Activated CD4-positive, alpha-beta T cell treated with anti-CD3 and anti-CD28 coated beads for 36 hours (primary cell): ENCODE measurements at regions of chr15 and their contacts with region 1.

Region 1: DNA sequence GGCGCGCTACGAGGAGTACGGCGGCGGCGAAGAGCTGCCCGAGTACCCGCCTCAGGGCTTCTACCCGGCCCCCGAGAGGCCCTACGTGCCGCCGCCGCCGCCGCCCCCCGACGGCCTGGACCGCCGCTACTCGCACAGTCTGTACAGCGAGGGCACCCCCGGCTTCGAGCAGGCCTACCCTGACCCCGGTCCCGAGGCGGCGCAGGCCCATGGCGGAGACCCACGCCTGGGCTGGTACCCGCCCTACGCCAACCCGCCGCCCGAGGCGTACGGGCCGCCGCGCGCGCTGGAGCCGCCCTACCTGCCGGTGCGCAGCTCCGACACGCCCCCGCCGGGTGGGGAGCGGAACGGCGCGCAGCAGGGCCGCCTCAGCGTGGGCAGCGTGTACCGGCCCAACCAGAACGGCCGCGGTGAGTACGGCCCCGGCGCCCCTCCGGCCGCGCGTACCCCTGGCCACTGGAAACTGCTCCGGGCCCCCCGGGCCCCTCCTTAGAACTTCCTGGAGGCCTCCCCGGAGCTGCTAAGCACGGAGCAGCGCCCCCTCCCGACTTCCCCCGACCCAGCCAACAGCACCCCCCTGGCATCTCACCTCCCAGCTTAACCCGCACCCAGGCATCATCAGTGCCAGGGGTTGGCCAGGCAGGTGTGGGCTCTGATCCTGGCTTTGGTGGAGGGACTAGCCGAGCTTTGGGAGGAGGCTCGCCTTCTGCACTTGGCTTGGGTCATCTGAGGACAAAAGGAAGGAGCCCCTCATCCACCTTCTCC is 1.4 kb downstream of the LOXL1 start:
- DNase-seq: peak; percentile 87
- ATAC-seq: peak; percentile 77
- H3K4me3 Mint-ChIP-seq: peak overlapping the region; percentile 72
- H3K27ac Mint-ChIP-seq: peak overlapping the region; percentile 42
- H3K4me1 Mint-ChIP-seq: peaks cover 35% of the 10 kb centered on the region
- H3K27me3 Mint-ChIP-seq: no peaks in the 10 kb centered on the region

Region 2: DNA sequence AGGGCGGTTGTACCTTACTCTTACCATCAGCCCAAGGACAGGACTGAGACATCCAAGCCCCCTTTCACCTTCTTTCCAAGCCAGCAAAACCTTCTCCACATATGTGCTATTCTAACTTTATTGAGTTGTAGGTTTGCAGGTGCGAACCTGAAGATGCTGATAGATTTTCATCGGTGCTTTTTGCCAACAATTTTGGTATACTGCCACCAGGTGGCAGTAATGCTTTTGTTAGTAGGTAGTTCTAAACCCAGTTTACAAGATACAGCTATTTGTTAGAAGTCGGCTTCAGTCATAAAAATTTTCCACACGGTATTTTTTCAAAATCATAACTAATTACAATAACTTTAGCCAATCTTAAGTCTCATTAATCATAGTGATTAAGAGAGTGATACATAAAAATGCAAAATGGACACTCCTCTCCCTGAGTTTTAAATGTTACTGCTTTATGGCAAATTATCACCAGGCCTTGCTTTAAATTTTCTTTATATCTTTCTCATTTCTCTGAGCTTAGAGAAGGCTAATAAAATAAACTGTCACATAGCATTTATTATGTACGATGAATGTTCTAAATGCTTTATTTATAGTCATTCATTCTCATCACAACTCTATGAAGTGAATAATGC is 53.7 kb before region 1 on chr15:
- CTCF ChIA-PET with region 1: interaction called, 12 read pairs
- POLR2A ChIA-PET with region 1: no interaction called
- intact Hi-C with region 1: loop called in 1 of 2 experiments (anchors 5 kb)
- DNase-seq: peak; percentile 50
- ATAC-seq: no peak
- H3K4me3 Mint-ChIP-seq: no peak overlapping the region
- H3K27ac Mint-ChIP-seq: no peak overlapping the region
- H3K4me1 Mint-ChIP-seq: no peaks in the 10 kb centered on the region
- H3K27me3 Mint-ChIP-seq: peaks cover 26% of the 10 kb centered on the region

Region 3: GRCh38 chr15:73897441-73898261 is 30.0 kb before region 1 on chr15:
- CTCF ChIA-PET with region 1: interaction called, 5 read pairs
- POLR2A ChIA-PET with region 1: no interaction called
- intact Hi-C with region 1: loop called in 1 of 2 experiments (anchors 1 kb)
- DNase-seq: peak; percentile 85
- ATAC-seq: peak; percentile 95
- H3K4me3 Mint-ChIP-seq: no peak overlapping the region
- H3K27ac Mint-ChIP-seq: no peak overlapping the region
- H3K4me1 Mint-ChIP-seq: no peaks in the 10 kb centered on the region
- H3K27me3 Mint-ChIP-seq: no peaks in the 10 kb centered on the region

Region 4: DNA sequence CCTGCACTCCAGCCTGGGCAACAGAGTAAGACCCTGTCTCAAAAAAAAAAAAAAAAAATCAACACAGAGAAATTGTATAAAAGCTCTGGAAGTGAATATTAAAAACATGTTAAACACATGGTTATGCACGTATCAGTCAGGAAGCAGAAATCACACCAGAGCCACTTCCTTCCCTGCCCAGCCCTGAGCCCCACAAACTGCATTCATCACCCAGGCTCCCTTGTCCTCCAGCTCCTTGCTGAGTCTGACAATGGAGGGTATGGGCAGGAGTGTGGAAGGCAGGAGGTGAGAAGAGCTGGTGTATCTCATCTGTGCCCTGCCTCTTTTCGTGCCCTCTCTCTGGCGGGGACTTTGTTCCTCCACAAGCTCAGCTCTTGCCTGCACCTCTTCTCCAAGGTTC is 13.5 kb before region 1 on chr15:
- CTCF ChIA-PET with region 1: interaction called, 11 read pairs
- POLR2A ChIA-PET with region 1: no interaction called
- intact Hi-C with region 1: no loop called
- DNase-seq: no peak
- ATAC-seq: peak; percentile 53
- H3K4me3 Mint-ChIP-seq: no peak overlapping the region
- H3K27ac Mint-ChIP-seq: peak overlapping the region; percentile 10
- H3K4me1 Mint-ChIP-seq: peaks cover 8% of the 10 kb centered on the region
- H3K27me3 Mint-ChIP-seq: no peaks in the 10 kb centered on the region

Region 5: GRCh38 chr15:75468913-75469598 is 1541.4 kb after region 1 on chr15:
- CTCF ChIA-PET with region 1: no interaction called
- POLR2A ChIA-PET with region 1: no interaction called
- intact Hi-C with region 1: no loop called
- DNase-seq: no peak
- ATAC-seq: no peak
- H3K4me3 Mint-ChIP-seq: no peak overlapping the region
- H3K27ac Mint-ChIP-seq: peak overlapping the region; percentile 23
- H3K4me1 Mint-ChIP-seq: no peaks in the 10 kb centered on the region
- H3K27me3 Mint-ChIP-seq: no peaks in the 10 kb centered on the region